OCI-LY7 (cell line): ENCODE measurements at regions of chr2 and their contacts with region 1.

Region 1: GRCh38 chr2:160703648-160704585 is 210.3 kb upstream of the RBMS1 start:
- DNase-seq: peak; percentile 82
- H3K4me3 ChIP-seq: peak overlapping the region; percentile 36
- H3K27ac ChIP-seq: peak overlapping the region; percentile 78
- H3K4me1 ChIP-seq: peaks cover 38% of the 10 kb centered on the region
- CTCF ChIP-seq: no peak

Region 2: DNA sequence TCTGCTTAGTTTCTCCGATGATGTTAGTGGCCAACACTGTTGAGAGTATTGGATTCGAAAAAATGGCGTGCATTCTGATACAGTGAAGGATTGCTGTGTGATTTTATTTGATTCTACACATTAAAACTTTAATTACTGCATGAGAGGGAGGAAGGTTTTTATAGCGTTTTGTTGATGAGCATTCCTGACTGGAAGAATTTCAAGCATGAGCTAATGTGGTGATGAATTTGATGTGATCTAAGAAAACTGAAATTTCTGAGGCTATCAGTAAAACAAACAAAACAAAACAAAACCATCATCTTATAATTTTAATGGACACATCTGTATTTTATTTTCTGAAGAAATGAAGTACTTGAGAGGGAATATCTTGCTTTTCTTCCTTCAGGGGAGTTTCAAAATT is 563.4 kb before region 1 on chr2:
- CTCF ChIA-PET with region 1: no interaction called
- POLR2A ChIA-PET with region 1: interaction called, 3 read pairs
- intact Hi-C with region 1: loop called (anchors 10 kb)
- DNase-seq: no peak
- H3K4me3 ChIP-seq: no peak overlapping the region
- H3K27ac ChIP-seq: no peak overlapping the region
- H3K4me1 ChIP-seq: peaks cover 3% of the 10 kb centered on the region
- CTCF ChIP-seq: no peak

Region 3: DNA sequence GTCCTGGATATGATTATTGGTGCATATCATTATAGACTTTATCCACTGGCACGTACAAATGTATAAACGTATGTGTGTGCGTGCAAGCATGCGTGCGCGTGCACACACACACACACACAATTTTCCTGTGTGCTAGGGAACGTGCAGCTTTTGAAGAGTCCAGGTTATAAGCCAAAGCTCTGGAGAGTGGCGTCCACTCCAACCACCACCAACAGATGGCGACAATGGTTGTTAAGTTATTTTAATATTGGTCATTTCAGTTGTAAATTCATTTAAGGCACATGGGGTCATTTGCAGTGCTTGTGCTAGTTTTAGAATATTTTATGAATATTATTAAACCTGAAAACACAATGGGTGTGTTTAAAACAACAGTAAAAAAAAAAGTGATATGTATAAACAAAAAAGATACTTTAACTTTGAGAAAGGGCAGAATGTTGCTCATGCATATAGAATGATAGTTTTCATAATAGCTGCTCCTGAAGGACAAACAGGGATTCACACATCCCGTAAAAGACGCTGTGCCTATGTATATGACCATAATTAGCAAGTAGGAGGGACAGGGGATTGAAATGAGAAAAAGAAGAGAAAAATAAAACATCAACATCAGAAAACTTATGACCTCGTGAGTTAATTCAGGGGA is 379.6 kb before region 1 on chr2:
- CTCF ChIA-PET with region 1: no interaction called
- POLR2A ChIA-PET with region 1: no interaction called
- intact Hi-C with region 1: loop called (anchors 10 kb)
- DNase-seq: peak; percentile 49
- H3K4me3 ChIP-seq: no peak overlapping the region
- H3K27ac ChIP-seq: no peak overlapping the region
- H3K4me1 ChIP-seq: peaks cover 6% of the 10 kb centered on the region
- CTCF ChIP-seq: peak; percentile 88

Region 4: GRCh38 chr2:160406591-160407392 is 297.1 kb before region 1 on chr2:
- CTCF ChIA-PET with region 1: no interaction called
- POLR2A ChIA-PET with region 1: no interaction called
- intact Hi-C with region 1: loop called (anchors 5 kb)
- DNase-seq: peak; percentile 88
- H3K4me3 ChIP-seq: peak overlapping the region; percentile 89
- H3K27ac ChIP-seq: peak overlapping the region; percentile 80
- H3K4me1 ChIP-seq: peaks cover 55% of the 10 kb centered on the region
- CTCF ChIP-seq: peak; percentile 62; the same call in 1 of the 2 replicates

Region 5: GRCh38 chr2:160429248-160430000 is 274.5 kb before region 1 on chr2:
- CTCF ChIA-PET with region 1: no interaction called
- POLR2A ChIA-PET with region 1: no interaction called
- intact Hi-C with region 1: loop called (anchors 5 kb)
- DNase-seq: peak; percentile 79
- H3K4me3 ChIP-seq: no peak overlapping the region
- H3K27ac ChIP-seq: peak overlapping the region; percentile 63
- H3K4me1 ChIP-seq: peaks cover 34% of the 10 kb centered on the region
- CTCF ChIP-seq: peak; percentile 92

Region 6: GRCh38 chr2:160730296-160730995 is 26.5 kb after region 1 on chr2:
- CTCF ChIA-PET with region 1: no interaction called
- POLR2A ChIA-PET with region 1: no interaction called
- intact Hi-C with region 1: no loop called
- DNase-seq: no peak
- H3K4me3 ChIP-seq: no peak overlapping the region
- H3K27ac ChIP-seq: no peak overlapping the region
- H3K4me1 ChIP-seq: no peaks in the 10 kb centered on the region
- CTCF ChIP-seq: no peak

Region 7: GRCh38 chr2:161063157-161063954 is 359.4 kb after region 1 on chr2:
- CTCF ChIA-PET with region 1: no interaction called
- POLR2A ChIA-PET with region 1: no interaction called
- intact Hi-C with region 1: loop called (anchors 10 kb)
- DNase-seq: peak; percentile 65
- H3K4me3 ChIP-seq: no peak overlapping the region
- H3K27ac ChIP-seq: no peak overlapping the region
- H3K4me1 ChIP-seq: no peaks in the 10 kb centered on the region
- CTCF ChIP-seq: peak; percentile 95

Region 8: DNA sequence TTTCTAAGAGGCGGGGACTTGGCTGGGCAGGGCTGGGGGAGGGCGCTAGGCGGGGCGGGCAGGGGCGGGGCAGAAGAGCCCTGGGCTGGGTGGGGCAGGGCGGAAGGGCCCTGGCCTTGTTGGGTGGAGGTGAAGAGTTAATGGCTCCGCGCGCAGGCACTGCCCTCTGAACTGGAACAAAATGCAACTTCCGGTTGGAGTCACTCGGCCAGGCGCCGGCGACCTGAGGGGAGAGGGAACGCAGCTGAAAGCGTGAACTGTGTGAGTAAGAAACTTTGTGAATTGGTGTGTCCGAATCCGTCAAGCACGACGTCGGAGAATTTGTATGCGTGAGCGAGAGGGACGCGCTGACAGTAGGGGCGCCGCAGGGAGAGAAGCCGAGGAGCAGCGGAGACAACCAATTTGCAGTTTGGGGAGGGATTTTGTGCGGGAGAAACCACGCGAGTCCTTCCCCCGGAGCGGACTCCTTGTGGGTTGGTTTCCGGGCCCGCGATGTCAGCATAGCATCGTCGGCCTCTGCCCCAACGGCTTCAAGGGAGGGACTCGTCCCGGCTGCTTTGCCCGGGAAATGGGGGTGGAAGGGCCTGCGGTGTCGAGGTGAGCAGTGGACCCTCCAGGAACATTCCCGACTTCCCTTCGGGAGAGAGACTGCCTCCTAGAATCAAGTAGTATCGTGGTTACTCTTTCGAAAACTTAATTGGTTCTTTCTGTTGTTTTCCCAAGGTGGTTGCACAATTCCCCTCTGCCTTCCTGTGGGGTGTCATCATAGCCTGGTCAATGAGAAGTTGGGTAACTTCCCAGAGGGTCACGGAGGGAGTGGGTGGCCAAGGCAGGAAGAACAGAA is 456.5 kb after region 1 on chr2 and contains the start of gene TANK:
- CTCF ChIA-PET with region 1: no interaction called
- POLR2A ChIA-PET with region 1: no interaction called
- intact Hi-C with region 1: loop called (anchors 10 kb)
- DNase-seq: peak; percentile 97
- H3K4me3 ChIP-seq: peak within 1 kb of the TSS; percentile 85
- H3K27ac ChIP-seq: peak within 1 kb of the TSS; percentile 91
- H3K4me1 ChIP-seq: peaks cover 29% of the 10 kb centered on the region
- CTCF ChIP-seq: 0 out of 2 replicates have a peak, but pooled peaks have one; percentile 12
- total RNA-seq, gene TANK: 43.4 and 52.6 TPM in 2 replicates